ENCODE measurements at regions of chr7 and their contacts with region 1.

Region 1: GRCh38 chr7:503575-504111 is 16.0 kb downstream of the PDGFA start:
- DNase-seq: no peak
- H3K4me3 ChIP-seq: no peak overlapping the region
- H3K27ac ChIP-seq: no peak overlapping the region
- H3K4me1 ChIP-seq: no peaks in the 10 kb centered on the region
- H3K27me3 ChIP-seq: no peaks in the 10 kb centered on the region
- CTCF ChIP-seq: no peak
- POLR2A ChIP-seq: no peak

Region 2: DNA sequence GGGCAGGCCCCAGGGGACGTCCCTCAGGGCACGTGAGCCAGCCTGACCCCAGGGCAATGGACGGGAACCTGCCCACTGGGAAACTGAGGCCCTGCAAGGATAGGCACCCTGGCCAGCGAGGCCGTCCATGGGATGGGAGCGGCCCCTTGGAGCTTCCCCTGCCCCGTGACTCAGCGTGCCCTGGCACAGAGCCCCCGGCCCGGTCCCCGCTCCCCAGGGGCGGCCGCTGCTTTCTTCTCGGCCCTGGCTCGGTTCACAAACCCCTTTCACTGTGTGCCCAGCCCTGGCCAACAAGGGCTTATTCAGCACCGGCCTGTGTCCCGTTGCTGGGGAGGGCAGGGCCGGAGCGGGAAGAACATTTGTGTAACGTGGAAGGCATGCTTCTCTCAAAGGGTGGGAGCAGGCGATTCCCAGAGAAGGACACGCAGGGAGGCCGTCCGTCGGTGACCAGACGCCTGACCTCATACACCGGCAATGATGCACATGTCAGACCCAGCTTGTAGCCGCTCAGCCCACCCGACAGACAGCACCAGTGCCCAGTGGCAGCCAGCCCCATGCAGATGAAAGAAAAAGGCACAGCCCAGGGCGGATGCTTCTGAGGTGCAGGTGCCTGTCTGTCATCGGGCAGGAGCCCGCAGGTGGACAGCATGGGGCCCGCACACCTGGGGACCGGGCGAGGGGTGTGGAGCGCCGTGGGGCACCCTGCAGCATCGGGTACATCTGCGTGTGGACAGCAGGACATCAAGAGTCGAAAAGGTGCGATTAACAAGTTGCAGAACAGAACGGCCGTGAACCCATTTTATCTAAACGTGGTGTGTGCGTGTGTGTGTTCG is 78.5 kb before region 1 on chr7:
- intact Hi-C with region 1: loop called in 1 of 2 experiments (anchors 10 kb)
- DNase-seq: peak in 1 of 7 donors; percentile 52
- H3K4me3 ChIP-seq: no peak overlapping the region
- H3K27ac ChIP-seq: no peak overlapping the region
- H3K4me1 ChIP-seq: no peaks in the 10 kb centered on the region
- H3K27me3 ChIP-seq: no peaks in the 10 kb centered on the region
- CTCF ChIP-seq: no peak
- POLR2A ChIP-seq: no peak